GM10248 (cell line): ENCODE measurements at regions of chr18 and their contacts with region 1.

Region 1: DNA sequence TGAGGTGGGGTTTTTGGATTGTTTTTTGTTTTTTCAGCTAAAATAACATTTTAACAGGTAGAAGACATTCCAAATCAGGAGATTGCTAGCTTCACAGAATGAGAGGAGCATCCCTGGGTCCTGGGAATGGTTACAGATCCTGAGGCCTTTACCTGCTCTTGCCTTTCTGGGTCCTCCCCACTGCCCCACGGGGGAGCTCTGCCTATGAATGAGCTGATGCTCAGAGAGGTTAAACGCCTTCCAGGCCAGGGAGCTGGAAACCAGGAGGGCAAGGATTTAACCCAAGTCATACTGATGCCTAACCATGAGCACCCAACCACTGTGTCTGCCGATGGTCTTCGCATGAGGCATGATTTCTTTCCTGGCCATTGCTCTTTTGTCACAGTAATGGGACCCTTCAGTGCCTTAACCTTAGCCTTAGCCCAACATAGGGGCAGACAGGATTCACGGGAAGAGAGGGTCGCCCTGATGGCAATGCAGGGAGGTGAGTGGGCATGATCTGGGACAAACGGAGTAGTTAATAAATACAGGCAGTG is 16.1 kb downstream of the MOCOS start:
- DNase-seq: no peak
- CTCF ChIP-seq: no peak

Region 2: GRCh38 chr18:35616664-35617423 is 586.6 kb before region 1 on chr18:
- CTCF ChIA-PET with region 1: no interaction called
- POLR2A ChIA-PET with region 1: no interaction called
- DNase-seq: peak; percentile 61
- CTCF ChIP-seq: no peak

Region 3: GRCh38 chr18:36188912-36189311 is 14.5 kb before region 1 on chr18:
- CTCF ChIA-PET with region 1: interaction called, 11 read pairs
- POLR2A ChIA-PET with region 1: no interaction called
- DNase-seq: no peak
- CTCF ChIP-seq: no peak

Region 4: GRCh38 chr18:36217348-36217747 is 13.9 kb after region 1 on chr18:
- CTCF ChIA-PET with region 1: interaction called, 11 read pairs
- POLR2A ChIA-PET with region 1: no interaction called
- DNase-seq: no peak
- CTCF ChIP-seq: no peak